Naive thymus-derived CD4-positive, alpha-beta T cell (primary cell): ENCODE measurements at regions of chr5 and their contacts with region 1.

Region 1: DNA sequence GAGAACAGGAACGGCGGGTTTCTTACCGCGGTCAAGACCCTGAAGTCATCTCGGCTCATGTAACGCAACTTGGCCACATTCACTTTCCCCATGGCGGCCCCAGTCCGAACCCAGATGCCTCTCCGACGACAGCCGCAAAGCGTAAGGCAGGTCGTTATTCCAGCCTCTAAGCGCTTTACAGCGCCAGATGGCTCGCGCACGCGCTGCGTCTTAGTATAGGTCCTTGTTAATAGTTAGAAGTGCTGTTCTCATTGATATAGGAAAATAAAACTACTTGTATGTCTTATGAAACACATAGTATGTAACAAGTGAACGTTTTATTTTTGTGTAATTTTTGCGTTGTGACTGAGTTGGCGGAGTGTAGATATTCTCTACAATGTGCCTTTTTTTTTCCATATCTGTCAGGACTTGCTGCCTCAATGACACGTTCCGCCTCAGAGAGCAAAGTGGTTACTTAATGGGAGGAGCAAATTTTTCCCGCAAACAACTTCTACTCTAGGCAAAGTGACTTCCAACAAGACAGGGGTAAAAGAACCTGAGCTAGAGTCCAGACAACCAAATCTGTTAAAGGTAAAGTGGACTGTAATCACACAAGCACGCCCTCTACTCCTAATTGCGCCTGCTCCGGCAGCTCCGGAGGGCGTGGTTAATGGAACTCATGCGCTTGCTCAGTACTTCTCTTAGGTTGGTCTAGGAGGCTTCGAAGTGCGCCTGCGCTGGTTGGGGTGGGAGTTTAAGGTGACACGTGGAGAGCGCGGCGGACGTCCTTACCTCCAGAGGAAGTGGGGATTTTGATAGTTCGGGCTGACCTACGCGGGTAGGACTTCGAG is at the start of gene RIOK2:
- DNase-seq: peak; percentile 77 to 93 (median 91)
- ATAC-seq: peak; percentile 96
- H3K4me3 ChIP-seq: peak within 1 kb of the TSS; percentile 82
- H3K4me3 Mint-ChIP-seq: peak within 1 kb of the TSS; percentile 89 to 98 (median 94)
- H3K27ac ChIP-seq: peak within 1 kb of the TSS; percentile 94
- H3K27ac Mint-ChIP-seq: peak within 1 kb of the TSS; percentile 99 to 100 (median 100)
- H3K4me1 ChIP-seq: peaks cover 4 to 14% of the 10 kb centered on the region in 2 donors
- H3K4me1 Mint-ChIP-seq: peaks cover 23 to 54% (median 44%) of the 10 kb centered on the region in 7 donors
- H3K27me3 ChIP-seq: no peaks in the 10 kb centered on the region
- H3K27me3 Mint-ChIP-seq: peaks cover 0 to 3% (median 0%) of the 10 kb centered on the region in 5 donors
- total RNA-seq, gene RIOK2: 18.8 to 36.0 (median 28.5) TPM

Region 2: GRCh38 chr5:95620030-95620869 is 1563.1 kb before region 1 on chr5 and contains the start of gene GPR150:
- CTCF ChIA-PET with region 1: no interaction called
- POLR2A ChIA-PET with region 1: no interaction called
- intact Hi-C with region 1: loop called (anchors 5 kb)
- DNase-seq: peak; percentile 44 to 67 (median 61)
- ATAC-seq: peak; percentile 77
- H3K4me3 ChIP-seq: peak within 1 kb of the TSS; percentile 75
- H3K4me3 Mint-ChIP-seq: peak within 1 kb of the TSS; percentile 88 to 96 (median 92)
- H3K27ac ChIP-seq: peak within 1 kb of the TSS; percentile 71
- H3K27ac Mint-ChIP-seq: peak within 1 kb of the TSS; percentile 60 to 87 (median 81)
- H3K4me1 ChIP-seq: peaks cover 22 to 46% of the 10 kb centered on the region in 2 donors
- H3K4me1 Mint-ChIP-seq: peaks cover 34 to 82% (median 67%) of the 10 kb centered on the region in 7 donors
- H3K27me3 ChIP-seq: no peaks in the 10 kb centered on the region
- H3K27me3 Mint-ChIP-seq: peaks cover 0 to 18% (median 0%) of the 10 kb centered on the region in 5 donors
- total RNA-seq, gene GPR150: 0.48 to 1.5 (median 1.1) TPM

Region 3: DNA sequence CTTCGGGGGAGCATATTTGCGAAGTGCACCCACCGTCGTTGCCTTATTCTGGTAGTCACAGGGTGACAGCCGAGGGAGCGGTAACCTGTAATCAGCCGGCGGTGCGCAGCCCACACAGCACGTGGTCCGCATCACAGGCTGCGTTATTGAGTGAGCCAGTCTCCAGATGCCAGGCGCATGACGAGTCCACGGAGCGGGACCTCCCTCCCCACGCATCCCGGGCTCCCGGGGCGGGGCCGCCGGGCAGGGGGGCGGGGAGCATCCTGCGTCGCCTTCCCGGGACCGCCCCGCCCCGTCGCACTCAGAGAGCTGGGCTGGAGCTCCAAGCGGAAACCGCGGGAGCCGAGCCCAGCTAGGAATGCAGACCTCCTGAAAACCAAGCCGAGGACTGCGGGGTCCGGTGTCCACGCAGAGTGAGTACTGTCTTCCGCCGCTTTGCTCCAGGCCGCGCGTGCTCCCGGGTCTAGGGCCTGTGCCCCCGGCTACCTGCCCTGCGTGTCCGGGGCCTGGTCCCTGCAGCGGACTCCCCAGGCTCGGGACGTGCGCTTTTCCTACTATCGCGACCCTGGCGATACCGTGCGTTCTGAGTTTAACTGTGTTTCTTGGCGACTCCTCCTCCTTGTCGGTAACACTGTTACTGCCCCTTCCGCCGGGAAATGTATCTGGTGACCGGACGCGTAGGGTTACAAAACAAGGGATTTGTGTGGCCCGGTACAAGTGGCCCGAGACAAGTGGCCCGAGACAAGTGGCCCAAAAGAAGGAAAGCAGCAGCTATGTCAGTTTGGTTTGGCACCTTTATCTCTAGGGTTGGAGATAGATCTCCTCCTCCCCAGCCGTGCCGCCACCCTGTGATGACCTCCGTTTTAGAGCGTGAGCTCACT is 480.6 kb before region 1 on chr5:
- CTCF ChIA-PET with region 1: no interaction called
- POLR2A ChIA-PET with region 1: no interaction called
- intact Hi-C with region 1: loop called in 1 of 2 experiments (anchors 2 kb)
- DNase-seq: peak; percentile 60 to 88 (median 77)
- ATAC-seq: peak; percentile 91
- H3K4me3 ChIP-seq: peak overlapping the region; percentile 75
- H3K4me3 Mint-ChIP-seq: peak overlapping the region; percentile 87 to 98 (median 94)
- H3K27ac ChIP-seq: peak overlapping the region; percentile 82
- H3K27ac Mint-ChIP-seq: peak overlapping the region; percentile 90 to 98 (median 96)
- H3K4me1 ChIP-seq: peaks cover 7 to 20% of the 10 kb centered on the region in 2 donors
- H3K4me1 Mint-ChIP-seq: peaks cover 18 to 56% (median 29%) of the 10 kb centered on the region in 7 donors
- H3K27me3 ChIP-seq: no peaks in the 10 kb centered on the region
- H3K27me3 Mint-ChIP-seq: no peaks in the 10 kb centered on the region

Region 4: DNA sequence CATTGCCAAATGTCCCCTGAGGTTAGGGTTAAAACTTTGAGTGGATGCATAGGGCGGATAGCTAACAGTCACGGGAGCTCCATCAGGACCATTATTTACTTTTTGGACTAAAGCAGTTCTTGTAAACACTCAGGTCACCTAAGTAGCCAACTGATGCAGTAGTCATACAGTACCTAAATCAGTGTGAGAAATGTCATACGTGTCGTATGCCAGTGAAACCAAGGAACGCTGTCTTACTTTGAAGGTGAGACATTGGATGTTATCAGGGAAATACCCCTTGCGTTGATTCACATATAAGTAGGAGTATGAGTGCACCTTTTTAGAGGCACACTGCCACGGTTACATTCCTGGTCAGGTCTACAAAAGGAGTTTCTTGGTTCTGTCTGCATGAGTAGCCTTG is 145.5 kb before region 1 on chr5:
- CTCF ChIA-PET with region 1: no interaction called
- POLR2A ChIA-PET with region 1: no interaction called
- intact Hi-C with region 1: no loop called
- DNase-seq: no peak
- ATAC-seq: no peak
- H3K4me3 ChIP-seq: no peak overlapping the region
- H3K4me3 Mint-ChIP-seq: no peak overlapping the region
- H3K27ac ChIP-seq: no peak overlapping the region
- H3K27ac Mint-ChIP-seq: peak overlapping the region in 2 of 9 donors; percentile 19 to 32
- H3K4me1 ChIP-seq: no peaks in the 10 kb centered on the region
- H3K4me1 Mint-ChIP-seq: peaks cover 0 to 7% (median 3%) of the 10 kb centered on the region in 7 donors
- H3K27me3 ChIP-seq: no peaks in the 10 kb centered on the region
- H3K27me3 Mint-ChIP-seq: no peaks in the 10 kb centered on the region

Region 5: GRCh38 chr5:97162045-97162444 is 21.3 kb before region 1 on chr5:
- CTCF ChIA-PET with region 1: interaction called, 6 read pairs
- POLR2A ChIA-PET with region 1: no interaction called
- intact Hi-C with region 1: loop called in 1 of 2 experiments (anchors 1 kb)
- DNase-seq: peak in 7 of 9 donors; percentile 23 to 64 (median 45)
- ATAC-seq: peak; percentile 62
- H3K4me3 ChIP-seq: no peak overlapping the region
- H3K4me3 Mint-ChIP-seq: no peak overlapping the region
- H3K27ac ChIP-seq: no peak overlapping the region
- H3K27ac Mint-ChIP-seq: no peak overlapping the region
- H3K4me1 ChIP-seq: no peaks in the 10 kb centered on the region
- H3K4me1 Mint-ChIP-seq: peaks cover 0 to 17% (median 11%) of the 10 kb centered on the region in 7 donors
- H3K27me3 ChIP-seq: no peaks in the 10 kb centered on the region
- H3K27me3 Mint-ChIP-seq: peaks cover 0 to 4% (median 0%) of the 10 kb centered on the region in 5 donors

Region 6: GRCh38 chr5:97194366-97194765 is 11.1 kb after region 1 on chr5:
- CTCF ChIA-PET with region 1: no interaction called
- POLR2A ChIA-PET with region 1: no interaction called
- intact Hi-C with region 1: no loop called
- DNase-seq: peak in 1 of 9 donors; percentile 7
- ATAC-seq: no peak
- H3K4me3 ChIP-seq: no peak overlapping the region
- H3K4me3 Mint-ChIP-seq: peak overlapping the region in 2 of 10 donors; percentile 2 to 30
- H3K27ac ChIP-seq: no peak overlapping the region
- H3K27ac Mint-ChIP-seq: peak overlapping the region in 1 of 9 donors; percentile 54
- H3K4me1 ChIP-seq: peaks cover 0 to 8% of the 10 kb centered on the region in 2 donors
- H3K4me1 Mint-ChIP-seq: peaks cover 5 to 18% (median 8%) of the 10 kb centered on the region in 7 donors
- H3K27me3 ChIP-seq: no peaks in the 10 kb centered on the region
- H3K27me3 Mint-ChIP-seq: peaks cover 0 to 12% (median 0%) of the 10 kb centered on the region in 5 donors

Region 7: DNA sequence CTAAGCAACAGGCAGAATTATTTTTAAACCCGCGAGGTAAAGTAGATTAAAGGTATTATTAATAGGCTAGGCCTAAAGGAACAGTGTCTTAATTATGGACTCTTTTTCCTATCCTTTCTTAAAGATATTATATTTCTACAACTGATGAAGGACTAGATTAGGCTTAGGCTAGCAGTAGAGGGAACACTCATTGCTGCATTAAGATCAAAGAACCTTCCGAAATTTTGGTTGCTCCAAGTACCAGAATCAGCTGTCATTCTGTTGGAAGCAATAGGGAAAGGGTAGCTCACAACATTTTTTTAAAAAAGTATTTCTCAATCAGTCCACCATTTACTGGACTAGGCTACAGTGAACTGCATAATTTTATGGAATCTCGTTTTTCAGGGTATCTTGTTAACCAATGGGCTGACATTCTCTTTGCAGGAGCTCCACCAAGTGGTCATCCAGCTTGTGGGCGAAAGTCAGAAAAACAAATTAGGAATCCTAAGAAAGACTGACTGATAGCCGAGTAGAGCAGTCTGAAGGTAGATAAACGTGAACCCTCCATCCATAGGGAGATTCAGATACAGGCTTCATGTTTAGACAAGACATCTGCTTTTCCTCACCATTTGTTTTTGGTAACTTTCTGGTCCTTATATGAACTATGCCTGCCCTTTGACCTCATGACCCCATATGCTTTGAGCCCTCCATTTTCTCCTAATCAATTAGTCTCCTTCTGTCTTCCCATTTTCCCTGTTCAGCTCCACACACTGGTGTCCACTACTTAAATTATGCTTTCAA is 1849.1 kb after region 1 on chr5:
- CTCF ChIA-PET with region 1: no interaction called
- POLR2A ChIA-PET with region 1: no interaction called
- intact Hi-C with region 1: loop called (anchors 2 to 5 kb)
- DNase-seq: peak in 3 of 9 donors; percentile 22 to 43 (median 38)
- ATAC-seq: peak; percentile 49
- H3K4me3 ChIP-seq: peak overlapping the region; percentile 43
- H3K4me3 Mint-ChIP-seq: peak overlapping the region; percentile 71 to 97 (median 88)
- H3K27ac ChIP-seq: peak overlapping the region; percentile 70
- H3K27ac Mint-ChIP-seq: peak overlapping the region; percentile 85 to 98 (median 96)
- H3K4me1 ChIP-seq: peaks cover 30 to 31% of the 10 kb centered on the region in 2 donors
- H3K4me1 Mint-ChIP-seq: peaks cover 32 to 87% (median 79%) of the 10 kb centered on the region in 7 donors
- H3K27me3 ChIP-seq: no peaks in the 10 kb centered on the region
- H3K27me3 Mint-ChIP-seq: no peaks in the 10 kb centered on the region